CD8-positive, alpha-beta T cell (primary cell): ENCODE measurements at regions of chr5 and their contacts with region 1.

Region 1: GRCh38 chr5:151063142-151063949 is 17.5 kb downstream of the TNIP1 start:
- DNase-seq: no peak
- ATAC-seq: no peak
- H3K4me3 ChIP-seq: no peak overlapping the region
- H3K4me3 Mint-ChIP-seq: no peak overlapping the region
- H3K27ac ChIP-seq: no peak overlapping the region
- H3K27ac Mint-ChIP-seq: peak overlapping the region; percentile 50
- H3K4me1 ChIP-seq: peaks cover 15% of the 10 kb centered on the region
- H3K4me1 Mint-ChIP-seq: peaks cover 45% of the 10 kb centered on the region
- H3K27me3 ChIP-seq: no peaks in the 10 kb centered on the region
- H3K27me3 Mint-ChIP-seq: no peaks in the 10 kb centered on the region
- CTCF ChIP-seq: no peak

Region 2: DNA sequence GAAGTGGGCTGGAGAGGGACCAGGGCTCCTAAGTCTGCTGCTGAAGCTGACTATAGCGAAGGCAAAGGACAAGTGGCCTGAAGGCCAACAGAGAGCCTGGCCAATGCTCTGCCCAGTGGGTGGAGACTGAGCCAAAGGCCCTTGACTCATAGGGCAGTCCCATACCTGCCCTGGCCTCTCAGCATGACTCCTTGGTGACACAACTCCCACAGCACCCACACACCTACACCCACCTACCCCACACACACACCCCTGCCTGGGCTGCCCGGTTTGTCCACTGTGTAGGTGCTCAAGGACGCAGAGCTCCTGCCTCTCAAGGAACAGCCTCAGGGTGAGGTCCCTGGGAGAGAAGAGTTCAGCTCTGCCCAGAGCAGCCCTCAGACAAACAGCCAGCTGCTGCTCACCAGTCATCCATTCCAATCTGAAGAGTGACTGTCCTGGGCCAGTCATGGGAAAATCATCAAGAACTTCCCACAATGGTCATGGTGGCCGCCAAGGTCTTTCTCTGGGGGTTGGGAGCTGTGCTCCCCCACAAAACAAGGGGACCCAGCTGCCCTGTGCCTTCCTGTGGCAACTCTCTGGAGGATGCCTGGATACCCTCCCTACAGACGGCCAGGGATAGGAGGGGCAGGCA is 12.5 kb after region 1 on chr5:
- CTCF ChIA-PET with region 1: interaction called, 3 read pairs
- POLR2A ChIA-PET with region 1: no interaction called
- intact Hi-C with region 1: loop called in 1 of 2 experiments (anchors 2 kb)
- DNase-seq: no peak
- ATAC-seq: no peak
- H3K4me3 ChIP-seq: no peak overlapping the region
- H3K4me3 Mint-ChIP-seq: no peak overlapping the region
- H3K27ac ChIP-seq: no peak overlapping the region
- H3K27ac Mint-ChIP-seq: peak overlapping the region; percentile 66
- H3K4me1 ChIP-seq: peaks cover 50% of the 10 kb centered on the region
- H3K4me1 Mint-ChIP-seq: peaks cover 74% of the 10 kb centered on the region
- H3K27me3 ChIP-seq: no peaks in the 10 kb centered on the region
- H3K27me3 Mint-ChIP-seq: no peaks in the 10 kb centered on the region
- CTCF ChIP-seq: no peak

Region 3: DNA sequence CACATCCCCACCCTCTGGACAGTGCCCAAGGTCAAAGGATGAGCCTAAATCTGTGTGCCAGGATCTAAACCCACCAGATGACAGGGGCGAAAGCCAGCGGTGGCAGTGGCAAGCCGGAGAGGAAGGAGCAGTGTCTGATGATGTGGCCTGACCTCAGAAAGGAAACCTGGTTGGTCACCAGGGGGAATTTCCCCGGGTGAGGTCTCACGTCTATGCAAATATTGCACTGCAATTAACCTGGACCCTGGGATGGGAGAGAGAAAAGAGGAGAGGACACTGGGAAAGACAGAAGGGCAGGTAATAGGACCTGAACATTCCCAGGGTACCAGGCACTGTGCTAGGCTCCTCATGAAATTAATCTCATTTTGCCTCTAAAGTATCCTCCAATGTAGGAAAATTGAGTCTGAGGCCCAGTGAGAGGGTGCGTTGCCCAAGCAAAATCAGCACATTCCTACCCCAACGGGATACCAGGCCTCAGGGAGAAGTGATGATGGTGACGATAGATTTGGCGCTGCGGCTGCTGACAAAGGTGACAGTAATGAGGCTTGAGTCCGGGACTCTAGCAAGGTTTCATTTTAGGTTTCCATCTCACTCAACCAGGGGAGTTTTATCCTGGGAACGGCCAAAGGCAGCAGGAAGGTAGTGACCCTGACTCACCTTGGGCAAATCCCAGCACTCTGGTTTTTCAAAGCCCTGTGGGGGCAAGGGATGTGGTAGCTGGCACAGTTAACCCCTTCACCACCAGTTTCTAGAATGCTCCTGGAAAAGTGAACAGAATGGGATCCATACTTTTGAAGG is 30.9 kb after region 1 on chr5:
- CTCF ChIA-PET with region 1: no interaction called
- POLR2A ChIA-PET with region 1: interaction called, 4 read pairs
- intact Hi-C with region 1: loop called in 1 of 2 experiments (anchors 5 kb)
- DNase-seq: peak in 7 of 9 experiments; percentile 27 to 86 (median 53)
- ATAC-seq: peak; percentile 50
- H3K4me3 ChIP-seq: peak overlapping the region in 1 of 2 experiments; percentile 18
- H3K4me3 Mint-ChIP-seq: peak overlapping the region; percentile 52
- H3K27ac ChIP-seq: peak overlapping the region in 1 of 2 experiments; percentile 73
- H3K27ac Mint-ChIP-seq: peak overlapping the region; percentile 89
- H3K4me1 ChIP-seq: peaks cover 53% of the 10 kb centered on the region
- H3K4me1 Mint-ChIP-seq: peaks cover 70% of the 10 kb centered on the region
- H3K27me3 ChIP-seq: no peaks in the 10 kb centered on the region
- H3K27me3 Mint-ChIP-seq: no peaks in the 10 kb centered on the region
- CTCF ChIP-seq: no peak